A673 (cell line): ENCODE measurements at regions of chr15 and their contacts with region 1.

Region 1: DNA sequence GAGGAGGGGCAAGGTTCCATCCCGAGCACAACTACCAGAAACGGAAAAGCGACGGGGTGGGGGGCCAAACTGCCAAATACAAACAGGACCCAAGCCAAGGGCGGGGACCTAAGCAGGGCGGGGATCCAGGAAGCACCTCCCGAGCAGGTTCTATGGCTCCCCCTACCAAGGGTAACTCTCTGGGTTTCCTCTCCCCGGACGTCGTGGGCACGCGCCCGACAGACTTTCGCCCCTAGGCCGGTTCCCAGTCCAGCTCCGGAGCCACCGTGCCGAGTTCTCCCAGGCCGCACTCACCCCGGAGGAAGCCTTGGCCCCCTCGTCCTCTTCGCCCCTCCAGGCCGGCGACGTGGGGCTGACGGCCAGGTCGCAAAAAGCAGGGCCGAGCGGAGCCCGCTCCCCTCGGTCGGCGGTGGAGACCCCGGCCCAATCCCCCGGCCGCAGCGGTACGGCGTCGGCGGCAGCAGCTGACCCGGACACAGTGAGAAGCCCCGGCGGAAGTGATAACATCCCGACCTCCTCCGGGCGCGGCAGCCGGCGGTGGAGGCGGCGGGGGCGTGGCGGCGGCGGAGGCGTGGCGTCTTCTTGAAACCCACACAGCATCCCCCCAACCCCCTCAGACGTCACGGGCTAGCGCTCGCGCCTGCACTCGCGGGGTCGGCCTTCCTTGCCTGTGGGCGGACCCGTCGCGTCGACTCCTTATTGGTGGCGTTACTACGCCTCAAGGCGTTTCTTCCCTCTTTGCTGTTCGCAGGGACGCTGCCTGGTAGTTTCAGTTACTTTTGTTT is at the start of gene BNIP2:
- DNase-seq: peak; percentile 99
- H3K4me3 ChIP-seq: peak within 1 kb of the TSS; percentile 92
- H3K27ac ChIP-seq: peak within 1 kb of the TSS; percentile 96
- H3K4me1 ChIP-seq: peaks cover 22% of the 10 kb centered on the region
- H3K27me3 ChIP-seq: no peaks in the 10 kb centered on the region
- CTCF ChIP-seq: no peak
- total RNA-seq, gene BNIP2: 58.1 and 59.3 TPM in 2 replicates

Region 2: DNA sequence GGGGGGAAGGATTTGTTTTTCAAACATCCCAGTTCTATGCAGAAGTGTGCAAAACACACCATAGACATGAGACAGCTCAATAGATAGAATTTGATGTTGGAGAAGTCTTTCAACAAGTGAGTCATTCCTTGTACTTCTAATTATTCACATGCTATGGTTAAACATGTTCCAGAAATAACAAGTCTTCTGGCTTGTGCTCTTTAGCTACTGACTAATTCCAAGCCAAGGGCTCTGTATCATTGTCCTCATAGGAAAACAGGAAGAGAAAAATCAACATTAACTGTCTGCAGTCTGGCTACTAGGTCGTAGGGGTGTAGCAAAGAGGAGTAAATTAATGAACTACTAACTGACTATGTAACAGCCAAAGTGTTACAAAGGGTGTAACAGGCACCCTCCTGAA is 456.6 kb before region 1 on chr15:
- CTCF ChIA-PET with region 1: no interaction called
- POLR2A ChIA-PET with region 1: no interaction called
- intact Hi-C with region 1: no loop called
- DNase-seq: no peak
- H3K4me3 ChIP-seq: no peak overlapping the region
- H3K27ac ChIP-seq: no peak overlapping the region
- H3K4me1 ChIP-seq: peaks cover 5% of the 10 kb centered on the region
- H3K27me3 ChIP-seq: no peaks in the 10 kb centered on the region
- CTCF ChIP-seq: no peak

Region 3: DNA sequence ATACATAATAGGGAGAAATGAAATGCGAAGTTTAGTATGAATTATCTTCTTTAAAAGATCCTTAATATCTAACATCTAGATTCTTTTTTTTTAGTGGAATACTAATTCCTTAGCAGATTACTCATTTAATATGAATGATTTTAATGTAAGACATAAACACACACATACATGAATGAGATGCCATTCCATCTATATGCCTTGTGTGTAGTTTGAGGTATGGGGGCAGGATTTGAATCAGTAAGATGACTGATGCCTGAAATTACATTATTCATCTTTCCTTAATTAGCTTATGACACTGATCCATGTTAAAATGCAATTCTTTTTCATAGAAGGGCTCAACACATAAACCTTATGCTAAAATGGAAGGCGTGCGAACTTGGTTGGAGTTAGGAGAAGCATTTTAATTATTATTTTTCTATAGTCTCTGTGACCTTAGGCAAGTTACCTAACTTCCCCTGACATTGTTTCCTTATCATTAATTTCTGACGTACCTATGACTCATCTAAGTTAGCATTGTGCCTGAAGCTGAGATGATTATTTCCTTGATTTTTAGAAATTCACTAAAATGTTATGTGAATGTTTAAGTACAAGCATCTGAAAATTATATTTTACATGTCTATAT is 10.9 kb after region 1 on chr15:
- CTCF ChIA-PET with region 1: interaction called, 10 read pairs
- POLR2A ChIA-PET with region 1: no interaction called
- intact Hi-C with region 1: no loop called
- DNase-seq: no peak
- H3K4me3 ChIP-seq: no peak overlapping the region
- H3K27ac ChIP-seq: no peak overlapping the region
- H3K4me1 ChIP-seq: no peaks in the 10 kb centered on the region
- H3K27me3 ChIP-seq: no peaks in the 10 kb centered on the region
- CTCF ChIP-seq: no peak